ENCODE measurements at regions of chr10 and their contacts with region 1.

Region 1: DNA sequence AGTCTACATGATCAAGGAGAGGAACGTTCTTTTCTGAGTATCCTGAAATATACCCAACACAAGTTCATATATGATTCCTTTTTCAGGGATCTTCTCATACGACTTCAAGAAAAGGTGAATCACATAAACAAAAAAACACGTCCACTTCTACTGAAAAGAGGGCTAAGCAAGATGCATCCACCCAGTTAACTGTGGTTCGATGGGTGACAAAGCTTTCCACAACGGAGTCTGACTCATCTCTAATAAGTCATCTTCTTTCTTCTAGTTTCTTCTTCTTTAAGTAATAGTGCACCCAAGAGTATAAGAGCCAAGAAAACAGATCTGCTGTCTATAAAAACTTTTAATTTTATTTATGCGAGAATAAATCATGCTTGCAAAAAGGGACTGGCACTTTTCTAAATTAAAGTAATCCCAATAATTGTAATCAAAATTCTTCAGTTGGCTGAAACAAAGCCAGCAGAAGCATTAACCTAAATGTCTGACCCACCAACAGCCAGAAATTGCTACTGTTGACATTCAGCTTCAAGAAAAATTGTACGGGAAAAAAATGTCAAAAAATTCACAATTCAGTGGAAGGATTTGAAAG is 146.9 kb upstream of the ANK3 start:
- DNase-seq: peak; percentile 51
- H3K4me3 Mint-ChIP-seq: no peak overlapping the region
- H3K27ac Mint-ChIP-seq: peak overlapping the region; percentile 42
- H3K4me1 Mint-ChIP-seq: peaks cover 41% of the 10 kb centered on the region
- H3K27me3 Mint-ChIP-seq: no peaks in the 10 kb centered on the region

Region 2: DNA sequence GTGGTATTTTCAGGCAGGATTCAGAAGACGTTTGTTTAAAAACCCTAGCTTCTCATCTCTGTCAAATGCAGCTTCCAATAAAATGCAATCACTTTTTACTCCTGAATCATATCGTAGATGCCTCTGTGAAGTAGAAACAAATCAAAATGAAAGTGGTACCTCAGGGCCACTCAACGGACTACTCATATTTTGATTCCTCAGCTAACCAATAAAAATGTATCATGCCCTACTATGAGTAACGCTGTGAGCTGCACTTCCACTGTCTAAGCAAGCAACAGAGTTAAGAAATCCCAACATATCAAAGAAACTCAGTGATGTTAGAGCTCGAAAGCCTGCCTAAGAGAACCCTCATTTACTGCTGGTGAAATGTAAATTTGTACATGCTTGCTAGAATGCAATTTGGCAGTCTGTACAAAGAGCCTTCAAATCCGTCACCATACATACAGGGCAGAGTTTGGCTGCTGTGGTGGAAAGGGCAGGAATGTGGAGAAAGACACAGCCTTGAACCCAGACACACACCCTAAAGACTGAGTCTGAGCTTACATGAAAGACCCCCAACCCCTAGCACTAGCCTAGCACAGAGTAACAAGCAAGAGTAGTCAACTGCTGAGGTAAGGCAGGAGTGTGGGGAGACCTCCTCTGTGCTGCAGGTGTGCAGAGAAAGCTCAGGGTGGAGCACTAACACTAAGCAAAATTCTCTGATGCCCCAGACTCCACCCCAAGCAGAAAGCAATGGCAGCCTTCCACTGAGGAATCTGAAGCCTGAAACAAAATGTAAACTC is 298.5 kb before region 1 on chr10:
- CTCF ChIA-PET with region 1: no interaction called
- POLR2A ChIA-PET with region 1: no interaction called
- intact Hi-C with region 1: loop called (anchors 5 kb)
- DNase-seq: peak; percentile 26
- H3K4me3 Mint-ChIP-seq: no peak overlapping the region
- H3K27ac Mint-ChIP-seq: peak overlapping the region; percentile 50
- H3K4me1 Mint-ChIP-seq: peaks cover 31% of the 10 kb centered on the region
- H3K27me3 Mint-ChIP-seq: no peaks in the 10 kb centered on the region

Region 3: DNA sequence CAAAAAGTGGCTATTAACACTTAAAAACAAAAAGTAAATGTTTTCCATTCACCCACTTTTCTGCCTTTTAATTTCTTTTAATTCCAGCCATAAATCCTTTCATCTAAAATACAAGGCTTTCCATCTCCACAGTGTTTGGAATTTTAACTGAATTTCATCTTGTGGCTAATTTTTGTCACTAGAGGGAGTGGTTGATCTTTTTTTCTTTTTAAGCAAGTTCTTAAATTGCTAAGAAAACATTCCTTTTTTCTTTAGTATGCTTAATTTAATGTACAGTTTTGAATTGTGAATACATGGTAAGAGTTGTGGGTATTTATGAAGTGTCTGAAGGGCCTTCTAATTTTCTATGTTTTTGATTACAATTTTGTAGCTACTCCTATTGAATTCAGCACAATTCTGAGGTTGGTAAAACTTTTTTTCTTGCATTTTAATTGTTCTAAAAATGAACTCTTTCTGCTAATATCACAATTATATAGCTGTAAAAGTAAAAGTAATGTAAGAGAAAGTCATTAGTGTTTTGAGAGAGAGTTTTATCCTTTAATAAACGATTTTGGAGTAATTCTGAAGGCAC is 92.0 kb before region 1 on chr10:
- CTCF ChIA-PET with region 1: interaction called, 3 read pairs
- POLR2A ChIA-PET with region 1: no interaction called
- intact Hi-C with region 1: loop called (anchors 5 kb)
- DNase-seq: no peak
- H3K4me3 Mint-ChIP-seq: no peak overlapping the region
- H3K27ac Mint-ChIP-seq: no peak overlapping the region
- H3K4me1 Mint-ChIP-seq: peaks cover 10% of the 10 kb centered on the region
- H3K27me3 Mint-ChIP-seq: no peaks in the 10 kb centered on the region

Region 4: GRCh38 chr10:60456053-60456452 is 80.6 kb before region 1 on chr10:
- CTCF ChIA-PET with region 1: no interaction called
- POLR2A ChIA-PET with region 1: no interaction called
- intact Hi-C with region 1: loop called (anchors 5 kb)
- DNase-seq: no peak
- H3K4me3 Mint-ChIP-seq: no peak overlapping the region
- H3K27ac Mint-ChIP-seq: no peak overlapping the region
- H3K4me1 Mint-ChIP-seq: peaks cover 20% of the 10 kb centered on the region
- H3K27me3 Mint-ChIP-seq: no peaks in the 10 kb centered on the region

Region 5: DNA sequence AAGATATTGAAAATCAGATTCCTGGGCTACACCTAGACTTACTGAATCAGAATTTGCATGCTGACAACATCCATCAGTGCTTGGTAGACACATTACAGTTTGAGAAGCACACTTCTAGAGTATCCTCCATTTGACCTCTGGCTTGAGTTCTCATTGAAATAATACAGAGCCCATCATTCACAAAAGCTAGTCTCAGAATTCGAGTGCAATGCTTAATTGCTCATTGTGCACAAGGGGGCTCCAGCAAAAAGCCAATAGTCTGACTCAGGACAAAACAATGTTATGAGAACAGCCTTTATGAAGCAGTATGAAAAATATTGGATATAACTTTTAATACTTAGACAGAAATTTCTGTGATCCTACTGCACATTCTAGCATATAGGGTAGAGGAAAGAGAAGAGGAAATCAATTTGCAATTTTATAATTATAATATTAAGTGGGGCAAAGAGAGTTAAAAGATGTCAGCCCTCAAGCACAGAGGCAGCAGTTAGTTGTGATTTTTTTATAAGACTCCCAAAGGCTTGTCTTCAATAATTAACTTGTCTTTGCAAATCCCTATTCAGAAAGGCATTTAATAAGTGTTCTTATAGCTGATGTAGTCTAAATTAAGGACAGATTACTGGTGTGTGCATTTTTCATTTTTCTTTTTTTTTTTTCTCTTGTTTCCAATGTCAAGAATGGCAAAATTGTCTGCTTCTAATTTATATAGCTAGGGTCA is 41.1 kb before region 1 on chr10:
- CTCF ChIA-PET with region 1: no interaction called
- POLR2A ChIA-PET with region 1: no interaction called
- intact Hi-C with region 1: loop called (anchors 5 kb)
- DNase-seq: no peak
- H3K4me3 Mint-ChIP-seq: no peak overlapping the region
- H3K27ac Mint-ChIP-seq: no peak overlapping the region
- H3K4me1 Mint-ChIP-seq: peaks cover 20% of the 10 kb centered on the region
- H3K27me3 Mint-ChIP-seq: no peaks in the 10 kb centered on the region

Region 6: DNA sequence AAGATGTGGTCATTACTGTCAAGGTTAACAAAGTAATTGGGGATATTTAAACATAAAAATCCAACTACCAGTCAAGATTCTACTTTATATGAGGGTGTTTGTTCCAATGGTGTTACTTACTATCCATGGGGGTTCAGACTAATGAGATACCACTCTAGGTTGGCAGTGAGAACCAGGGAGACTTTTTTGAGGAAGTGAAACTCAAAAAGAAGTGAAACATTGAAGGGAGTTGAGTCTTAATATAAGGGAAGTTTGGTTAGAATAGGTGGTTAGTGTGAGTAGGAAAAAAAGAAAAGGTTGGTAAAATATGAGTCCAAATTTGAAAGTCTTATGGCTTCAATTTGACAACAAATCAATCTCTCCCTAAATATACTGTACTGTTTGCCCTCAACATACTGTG is 23.3 kb before region 1 on chr10:
- CTCF ChIA-PET with region 1: no interaction called
- POLR2A ChIA-PET with region 1: no interaction called
- intact Hi-C with region 1: no loop called
- DNase-seq: no peak
- H3K4me3 Mint-ChIP-seq: no peak overlapping the region
- H3K27ac Mint-ChIP-seq: no peak overlapping the region
- H3K4me1 Mint-ChIP-seq: peaks cover 5% of the 10 kb centered on the region
- H3K27me3 Mint-ChIP-seq: no peaks in the 10 kb centered on the region

Region 7: GRCh38 chr10:60572511-60573194 is 36.0 kb after region 1 on chr10:
- CTCF ChIA-PET with region 1: no interaction called
- POLR2A ChIA-PET with region 1: no interaction called
- intact Hi-C with region 1: loop called (anchors 1 kb)
- DNase-seq: peak; percentile 51
- H3K4me3 Mint-ChIP-seq: peak overlapping the region; percentile 83
- H3K27ac Mint-ChIP-seq: peak overlapping the region; percentile 87
- H3K4me1 Mint-ChIP-seq: peaks cover 54% of the 10 kb centered on the region
- H3K27me3 Mint-ChIP-seq: no peaks in the 10 kb centered on the region

Region 8: DNA sequence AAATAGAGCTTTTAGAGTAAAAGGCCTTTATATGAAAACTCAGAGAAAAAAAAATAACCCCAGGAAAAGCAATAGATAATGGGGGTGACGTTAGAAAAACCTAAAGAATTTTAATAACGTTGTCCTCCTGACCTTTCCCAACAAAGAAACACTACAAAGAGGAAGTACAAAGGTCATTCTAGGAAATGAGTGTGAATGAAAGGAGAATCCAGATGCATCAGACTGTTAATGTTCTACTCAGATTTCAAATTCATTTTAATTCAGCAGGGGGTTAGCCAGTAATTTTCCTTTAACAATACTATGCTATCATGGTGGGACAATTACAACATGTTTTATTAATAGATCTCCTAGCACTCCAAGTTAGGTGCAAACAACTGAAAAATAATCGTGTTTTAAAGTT is 167.9 kb after region 1 on chr10:
- CTCF ChIA-PET with region 1: no interaction called
- POLR2A ChIA-PET with region 1: no interaction called
- intact Hi-C with region 1: no loop called
- DNase-seq: no peak
- H3K4me3 Mint-ChIP-seq: no peak overlapping the region
- H3K27ac Mint-ChIP-seq: no peak overlapping the region
- H3K4me1 Mint-ChIP-seq: peaks cover 55% of the 10 kb centered on the region
- H3K27me3 Mint-ChIP-seq: no peaks in the 10 kb centered on the region

Region 9: DNA sequence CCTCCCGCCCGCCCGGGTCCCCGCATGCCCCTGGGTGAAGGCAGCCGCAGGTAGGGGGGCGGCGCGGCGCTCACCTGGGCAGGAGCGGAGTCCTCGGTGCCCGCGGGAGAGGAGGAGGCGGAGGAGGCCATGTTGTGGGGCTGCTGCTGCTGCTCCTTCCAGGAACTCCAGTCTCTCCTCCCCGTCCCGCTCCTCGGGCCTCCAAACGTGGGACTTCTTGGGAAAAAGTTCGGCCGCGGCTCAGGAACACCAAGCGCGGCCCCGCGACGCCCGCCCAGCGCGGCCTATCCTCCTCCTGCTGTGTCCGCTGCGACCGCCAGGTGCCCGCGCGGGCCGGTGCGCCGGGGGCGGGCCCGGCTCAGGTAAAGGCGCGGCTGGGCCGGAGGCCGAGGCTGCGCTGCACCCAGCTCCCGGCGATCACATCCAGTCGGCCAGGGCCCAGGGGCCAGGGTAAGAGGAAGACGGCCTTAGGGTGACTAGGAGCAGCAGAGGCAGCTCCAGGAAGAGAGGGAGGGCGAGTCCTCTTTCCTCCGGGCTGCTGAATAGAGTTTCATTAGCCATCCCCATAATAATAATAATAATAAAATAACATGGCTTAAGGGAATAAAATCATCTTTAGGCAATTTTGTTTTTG is 196.7 kb after region 1 on chr10:
- CTCF ChIA-PET with region 1: no interaction called
- POLR2A ChIA-PET with region 1: no interaction called
- intact Hi-C with region 1: loop called (anchors 5 kb)
- DNase-seq: peak; percentile 55
- H3K4me3 Mint-ChIP-seq: peak overlapping the region; percentile 68
- H3K27ac Mint-ChIP-seq: no peak overlapping the region
- H3K4me1 Mint-ChIP-seq: peaks cover 27% of the 10 kb centered on the region
- H3K27me3 Mint-ChIP-seq: peaks cover 2% of the 10 kb centered on the region

Measured in activated CD4-positive, alpha-beta memory T cell treated with anti-CD3 and anti-CD28 coated beads for 36 hours (primary cell).